ENCODE measurements at regions of chr9 and their contacts with region 1.

Region 1: DNA sequence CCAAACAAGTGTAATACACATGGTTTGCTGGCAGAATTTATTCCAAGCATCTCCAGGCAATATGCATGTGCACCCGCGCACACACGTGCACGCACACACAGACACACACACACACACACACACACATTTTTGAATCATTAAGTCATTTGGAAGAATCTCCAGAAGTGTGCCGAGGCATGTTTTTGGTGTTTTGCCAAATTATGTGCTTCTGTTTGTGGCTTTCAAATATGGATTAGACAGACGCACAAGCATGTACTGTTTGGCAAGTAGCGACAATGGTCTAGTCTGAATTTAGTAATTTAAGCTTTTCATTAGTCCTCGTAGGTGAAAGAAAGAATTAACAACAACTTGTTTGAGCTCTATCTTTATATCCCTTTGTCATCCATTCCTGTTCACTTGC is 36.7 kb downstream of the NFIB start:
- DNase-seq: no peak
- ATAC-seq: no peak
- H3K4me3 ChIP-seq: no peak overlapping the region
- H3K27ac ChIP-seq: no peak overlapping the region
- H3K4me1 ChIP-seq: peaks cover 17% of the 10 kb centered on the region
- H3K27me3 ChIP-seq: no peaks in the 10 kb centered on the region
- CTCF ChIP-seq: no peak
- EP300 ChIP-seq: no peak
- POLR2A ChIP-seq: no peak
- RAD21 ChIP-seq: no peak

Region 2: GRCh38 chr9:13728917-13729811 is 548.1 kb before region 1 on chr9:
- CTCF ChIA-PET with region 1: no interaction called
- POLR2A ChIA-PET with region 1: no interaction called
- in situ Hi-C with region 1: no loop called
- intact Hi-C with region 1: no loop called
- DNase-seq: no peak
- ATAC-seq: no peak
- H3K4me3 ChIP-seq: no peak overlapping the region
- H3K27ac ChIP-seq: no peak overlapping the region
- H3K4me1 ChIP-seq: no peaks in the 10 kb centered on the region
- H3K27me3 ChIP-seq: no peaks in the 10 kb centered on the region
- CTCF ChIP-seq: no peak
- EP300 ChIP-seq: no peak
- POLR2A ChIP-seq: no peak
- RAD21 ChIP-seq: no peak

Region 3: DNA sequence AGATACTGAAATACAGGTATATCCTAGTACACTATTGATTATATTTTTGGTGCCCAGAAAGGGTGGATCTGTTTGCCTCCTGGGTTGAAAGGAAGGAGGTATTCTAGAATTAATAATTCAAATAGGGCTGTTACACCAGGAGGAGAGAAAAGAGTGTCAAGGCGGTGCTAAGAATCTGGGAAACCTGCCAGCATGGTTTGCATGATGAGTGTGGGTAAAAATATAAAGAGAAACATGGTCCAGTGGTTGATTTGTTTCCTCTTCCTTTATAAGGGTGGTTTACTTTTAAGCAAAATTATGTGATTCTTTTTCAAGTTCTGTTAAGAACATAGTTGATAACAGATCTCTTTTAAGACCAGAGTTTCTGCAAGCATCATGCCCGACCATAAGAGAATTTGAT is 106.0 kb after region 1 on chr9:
- CTCF ChIA-PET with region 1: no interaction called
- POLR2A ChIA-PET with region 1: no interaction called
- in situ Hi-C with region 1: loop called (anchors 25 kb)
- intact Hi-C with region 1: no loop called
- DNase-seq: no peak
- ATAC-seq: no peak
- H3K4me3 ChIP-seq: no peak overlapping the region
- H3K27ac ChIP-seq: no peak overlapping the region
- H3K4me1 ChIP-seq: no peaks in the 10 kb centered on the region
- H3K27me3 ChIP-seq: peaks cover 0 to 3% of the 10 kb centered on the region in 2 experiments; a peak in 2 of 5 replicates
- CTCF ChIP-seq: no peak
- EP300 ChIP-seq: no peak
- POLR2A ChIP-seq: no peak
- RAD21 ChIP-seq: no peak

Measured in HepG2 (cell line).